Esophagus muscularis mucosa (tissue), 4 donors: ENCODE measurements at regions of chr16 and their contacts with region 1.

Region 1: GRCh38 chr16:13919683-13920509 is at the start of gene ERCC4:
- DNase-seq: peak; percentile 99
- H3K4me3 ChIP-seq: peak within 1 kb of the TSS; percentile 63 to 98 (median 92)
- H3K27ac ChIP-seq: peak within 1 kb of the TSS; percentile 71 to 83 (median 82)
- H3K4me1 ChIP-seq: peaks cover 16 to 47% (median 43%) of the 10 kb centered on the region in 4 donors
- H3K27me3 ChIP-seq: no peaks in the 10 kb centered on the region
- CTCF ChIP-seq: peak; percentile 73 to 90 (median 83)
- EP300 ChIP-seq: no peak
- POLR2A ChIP-seq: no peak
- total RNA-seq, gene ERCC4: 4.6 to 10.0 (median 8.6) TPM

Region 2: DNA sequence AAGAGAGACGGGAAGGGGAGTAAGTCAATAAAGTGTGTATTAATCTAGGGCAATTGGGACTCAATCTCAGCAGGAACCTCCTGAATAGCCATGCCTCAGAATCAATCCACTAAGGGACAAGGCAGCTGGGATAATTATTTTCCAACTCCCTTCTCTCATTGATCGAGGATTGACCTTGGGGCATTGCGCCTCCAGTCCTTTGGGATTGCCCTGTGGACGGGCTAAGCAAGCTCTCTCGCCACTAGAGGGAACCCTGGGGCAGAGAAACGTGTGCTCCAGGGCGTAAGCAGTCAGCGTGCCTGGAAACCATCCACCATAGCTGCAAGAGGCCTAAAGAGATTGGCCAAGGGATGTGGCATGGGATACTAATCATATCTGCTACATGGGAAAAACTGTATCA is 53.8 kb before region 1 on chr16:
- intact Hi-C with region 1: loop called (anchors 2 kb)
- DNase-seq: no peak
- H3K4me3 ChIP-seq: no peak overlapping the region
- H3K27ac ChIP-seq: no peak overlapping the region
- H3K4me1 ChIP-seq: no peaks in the 10 kb centered on the region
- H3K27me3 ChIP-seq: no peaks in the 10 kb centered on the region
- CTCF ChIP-seq: peak; percentile 67 to 82 (median 76)
- EP300 ChIP-seq: no peak
- POLR2A ChIP-seq: no peak

Region 3: DNA sequence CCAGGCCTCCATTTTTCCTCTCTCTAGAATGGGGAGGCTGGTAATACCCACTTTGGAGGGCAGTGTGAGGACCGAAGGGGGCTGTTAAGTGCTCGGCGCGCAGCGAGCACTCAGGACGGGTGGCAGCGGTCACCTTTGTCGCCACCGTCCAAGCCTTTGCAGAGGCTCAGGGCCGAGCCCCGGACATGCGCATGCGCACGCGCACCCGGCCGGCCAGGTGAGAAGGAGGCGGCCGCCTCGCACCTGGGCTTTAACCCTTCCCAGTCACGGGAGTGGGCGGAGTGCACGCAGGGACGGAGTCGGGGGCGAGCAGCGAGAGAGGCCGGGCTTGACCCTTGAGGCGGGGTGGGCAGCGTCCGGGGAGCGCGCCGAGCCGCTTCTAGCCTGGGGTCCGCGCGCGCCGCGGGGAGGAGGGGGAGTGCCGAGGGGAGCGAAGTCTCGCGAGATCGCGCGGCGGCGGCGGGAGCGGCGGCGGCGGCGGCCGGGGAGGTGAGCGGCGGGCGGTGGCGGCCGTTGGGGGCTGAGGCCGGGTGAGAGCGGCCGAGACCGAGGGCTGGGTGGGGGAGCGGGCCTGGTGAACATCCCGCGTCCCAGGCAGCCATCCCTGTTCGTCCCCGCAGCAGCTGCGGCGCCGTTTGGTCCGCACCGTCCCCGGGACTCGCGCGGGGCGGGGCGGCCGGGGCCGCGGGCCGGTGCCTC is 151.1 kb after region 1 on chr16 and contains the start of gene MRTFB:
- intact Hi-C with region 1: loop called (anchors 10 kb)
- DNase-seq: no peak
- H3K4me3 ChIP-seq: peak within 1 kb of the TSS; percentile 80 to 95 (median 88)
- H3K27ac ChIP-seq: peak within 1 kb of the TSS; percentile 82 to 88 (median 86)
- H3K4me1 ChIP-seq: peaks cover 12 to 36% (median 30%) of the 10 kb centered on the region in 4 donors
- H3K27me3 ChIP-seq: no peaks in the 10 kb centered on the region
- CTCF ChIP-seq: no peak
- EP300 ChIP-seq: no peak
- POLR2A ChIP-seq: no peak
- total RNA-seq, gene MRTFB: 36.3 to 63.6 (median 48.2) TPM

Region 4: DNA sequence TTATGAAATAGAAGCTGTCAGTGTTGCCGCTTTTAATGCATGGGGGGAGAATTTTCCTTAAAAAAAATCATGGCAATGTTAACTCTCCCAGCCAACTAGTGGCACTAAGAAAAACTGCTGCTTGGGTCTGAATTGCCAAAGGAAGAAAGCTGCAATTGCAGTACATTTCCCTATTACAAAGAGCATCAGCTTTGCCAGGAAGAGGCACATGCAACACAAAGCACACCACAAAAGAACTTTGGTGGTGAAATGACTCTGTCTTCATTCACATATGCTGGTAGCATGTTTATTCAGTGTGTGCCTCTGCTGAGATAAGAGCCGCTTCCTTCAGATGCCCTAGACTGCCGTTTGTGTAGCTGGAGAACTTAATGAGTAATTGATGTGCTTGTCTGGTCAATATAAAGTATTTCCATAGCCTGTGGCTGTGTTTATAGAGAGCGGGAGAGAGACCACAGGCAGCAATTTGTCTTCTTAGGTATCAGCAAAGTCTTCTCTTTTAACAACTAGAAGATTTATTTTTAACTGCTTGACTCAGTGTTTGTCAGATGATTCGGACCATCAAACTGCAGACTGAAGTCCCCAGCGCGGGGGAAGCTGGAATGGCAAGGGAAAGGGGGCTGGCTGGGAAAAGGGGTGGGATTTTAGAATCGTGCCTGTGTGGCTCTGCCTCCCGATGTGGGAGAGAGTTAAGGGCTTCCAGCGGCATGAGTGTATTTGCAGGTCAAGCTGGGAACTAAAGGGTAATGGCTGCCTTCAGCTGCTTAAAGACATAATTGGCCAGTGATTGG is 266.3 kb after region 1 on chr16:
- intact Hi-C with region 1: loop called (anchors 5 kb)
- DNase-seq: no peak
- H3K4me3 ChIP-seq: peak overlapping the region; percentile 46 to 60 (median 48)
- H3K27ac ChIP-seq: peak overlapping the region; percentile 57 to 72 (median 70)
- H3K4me1 ChIP-seq: peaks cover 25 to 73% (median 51%) of the 10 kb centered on the region in 4 donors
- H3K27me3 ChIP-seq: no peaks in the 10 kb centered on the region
- CTCF ChIP-seq: peak; percentile 45 to 76 (median 46)
- EP300 ChIP-seq: no peak
- POLR2A ChIP-seq: no peak

Region 5: GRCh38 chr16:14249291-14250032 is 329.6 kb after region 1 on chr16:
- intact Hi-C with region 1: loop called (anchors 10 kb)
- DNase-seq: peak; percentile 66
- H3K4me3 ChIP-seq: no peak overlapping the region
- H3K27ac ChIP-seq: no peak overlapping the region
- H3K4me1 ChIP-seq: peaks cover 0 to 4% (median 0%) of the 10 kb centered on the region in 4 donors
- H3K27me3 ChIP-seq: no peaks in the 10 kb centered on the region
- CTCF ChIP-seq: peak; percentile 67 to 87 (median 80)
- EP300 ChIP-seq: no peak
- POLR2A ChIP-seq: no peak

Region 6: DNA sequence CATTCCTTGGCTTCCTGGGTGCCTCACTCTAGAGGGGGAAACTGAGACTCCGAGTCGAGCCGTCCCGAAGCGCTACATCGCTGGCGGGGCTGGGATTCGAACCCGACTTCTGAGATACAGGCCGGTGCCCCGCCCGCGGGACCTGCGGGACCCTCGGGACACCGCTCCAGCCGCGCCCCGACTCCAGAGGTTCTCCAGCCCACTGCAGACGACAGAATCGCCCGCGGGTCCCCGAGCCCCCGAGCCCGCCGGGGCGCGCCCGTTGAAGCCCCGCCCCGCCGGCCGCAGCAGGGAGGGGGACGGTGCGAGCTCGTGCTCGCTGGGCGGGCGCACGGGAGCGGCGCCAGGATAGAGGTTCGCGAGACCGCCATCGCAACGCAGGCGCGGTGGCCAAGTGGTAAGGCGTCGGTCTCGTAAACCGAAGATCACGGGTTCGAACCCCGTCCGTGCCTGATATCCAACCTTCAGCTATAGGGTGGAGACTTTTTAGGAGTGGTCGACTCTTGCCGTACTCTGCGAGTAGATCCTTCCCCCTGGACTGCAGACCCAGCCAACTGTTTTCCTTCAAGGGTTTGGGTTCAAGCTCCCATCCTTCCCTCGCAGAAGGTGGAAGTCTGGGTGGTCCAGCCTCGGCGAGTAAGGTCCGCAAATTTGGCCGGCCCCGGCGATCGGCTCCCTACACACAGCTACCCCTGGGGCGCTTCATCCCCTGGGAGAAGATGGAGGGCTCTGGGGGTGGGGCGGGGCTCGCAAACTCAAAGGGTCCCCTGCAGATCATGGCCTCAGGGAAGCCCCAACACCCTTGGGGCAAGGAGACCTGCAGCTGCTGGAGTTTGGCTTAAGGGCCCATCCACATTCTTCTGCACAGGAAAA is 365.9 kb after region 1 on chr16:
- intact Hi-C with region 1: loop called (anchors 5 kb)
- DNase-seq: peak; percentile 99
- H3K4me3 ChIP-seq: peak overlapping the region; percentile 73 to 86 (median 81)
- H3K27ac ChIP-seq: peak overlapping the region; percentile 84 to 91 (median 86)
- H3K4me1 ChIP-seq: peaks cover 10 to 22% (median 19%) of the 10 kb centered on the region in 4 donors
- H3K27me3 ChIP-seq: no peaks in the 10 kb centered on the region
- CTCF ChIP-seq: no peak
- EP300 ChIP-seq: no peak
- POLR2A ChIP-seq: no peak

Region 7: DNA sequence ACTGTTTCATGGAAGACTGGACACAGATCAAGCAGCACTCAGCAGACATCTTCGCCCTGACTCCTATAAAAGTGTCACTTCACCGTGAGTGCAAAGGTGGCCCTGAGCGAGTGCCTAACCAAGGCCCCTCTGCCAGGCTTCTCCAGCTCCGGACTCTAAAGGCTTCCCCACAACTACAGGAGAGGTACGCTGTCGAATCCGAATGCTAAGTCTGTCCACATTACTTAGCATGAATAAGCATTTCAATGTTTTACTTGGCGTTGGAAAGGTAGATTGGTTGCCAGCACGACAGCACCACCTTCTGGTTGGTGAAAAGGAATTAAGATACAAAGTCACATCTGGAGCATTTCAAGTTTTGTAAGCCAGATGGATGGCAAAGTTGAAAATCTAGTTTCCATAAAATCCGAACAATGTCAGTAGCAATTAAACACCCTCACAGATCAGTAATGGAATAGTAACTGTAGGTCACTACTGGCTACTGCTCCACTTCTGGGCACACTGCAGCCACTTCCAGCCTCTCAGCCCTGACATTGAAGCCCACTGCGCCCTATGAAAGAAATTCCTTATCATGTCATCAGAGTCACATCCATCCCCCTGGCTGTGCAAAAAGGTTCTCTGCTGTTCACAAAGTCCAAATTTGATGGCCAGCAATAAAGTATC is 609.2 kb after region 1 on chr16:
- intact Hi-C with region 1: loop called (anchors 5 kb)
- DNase-seq: peak; percentile 95
- H3K4me3 ChIP-seq: peak overlapping the region; percentile 35 to 51 (median 38)
- H3K27ac ChIP-seq: peak overlapping the region; percentile 46 to 67 (median 65)
- H3K4me1 ChIP-seq: peaks cover 17 to 35% (median 31%) of the 10 kb centered on the region in 4 donors
- H3K27me3 ChIP-seq: no peaks in the 10 kb centered on the region
- CTCF ChIP-seq: peak; percentile 71 to 83 (median 82)
- EP300 ChIP-seq: no peak
- POLR2A ChIP-seq: no peak